PC-9 (cell line): ENCODE measurements at regions of chr2 and their contacts with region 1.

Region 1: DNA sequence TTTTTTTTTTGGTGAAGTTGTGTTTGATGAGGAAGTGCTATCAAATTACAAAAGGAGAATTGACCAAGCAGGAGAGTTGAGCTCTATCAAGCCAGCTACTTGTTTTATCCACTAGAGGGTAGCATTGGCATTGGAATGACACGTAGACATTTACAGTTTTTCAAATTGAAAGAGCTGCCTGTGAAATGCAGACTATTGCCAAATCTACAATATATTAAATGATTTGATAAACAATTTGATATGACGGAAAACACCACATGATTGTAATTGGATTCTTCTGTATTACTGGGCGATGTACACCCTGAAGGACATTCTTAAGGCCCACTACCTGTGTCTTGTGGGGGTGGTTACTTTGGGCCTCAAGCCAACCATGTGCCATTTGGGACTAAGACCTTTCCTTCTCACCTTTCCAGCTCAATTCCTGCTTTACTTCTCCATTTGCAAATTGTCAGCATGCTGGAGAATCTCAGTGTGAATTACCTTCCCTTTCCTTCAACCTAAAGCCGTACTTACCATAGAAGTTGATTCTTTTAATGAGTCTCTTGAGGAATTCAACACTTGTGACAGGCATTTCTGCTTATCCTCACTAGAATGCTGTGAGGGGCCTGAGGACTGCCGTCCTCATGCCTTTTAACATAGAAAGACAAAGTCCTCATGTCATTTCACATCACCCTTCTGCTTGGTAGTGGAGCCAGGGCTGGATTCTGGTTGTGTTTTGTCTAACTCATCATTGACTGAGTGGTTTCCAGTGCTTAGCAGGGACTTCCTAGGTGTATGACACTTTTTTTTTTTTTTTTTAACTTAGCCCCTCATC is 134.8 kb upstream of the THUMPD2 start:
- DNase-seq: peak; percentile 29 to 68
- H3K4me3 ChIP-seq: no peak overlapping the region
- H3K27ac ChIP-seq: no peak overlapping the region
- H3K4me1 ChIP-seq: no peaks in the 10 kb centered on the region
- H3K27me3 ChIP-seq: no peaks in the 10 kb centered on the region
- CTCF ChIP-seq: peak; percentile 94

Region 2: GRCh38 chr2:39968037-39968436 is 54.2 kb after region 1 on chr2:
- CTCF ChIA-PET with region 1: interaction called, 12 read pairs
- POLR2A ChIA-PET with region 1: no interaction called
- intact Hi-C with region 1: no loop called
- DNase-seq: peak in 1 of 2 experiments; percentile 20
- H3K4me3 ChIP-seq: no peak overlapping the region
- H3K27ac ChIP-seq: no peak overlapping the region
- H3K4me1 ChIP-seq: no peaks in the 10 kb centered on the region
- H3K27me3 ChIP-seq: no peaks in the 10 kb centered on the region
- CTCF ChIP-seq: no peak

Region 3: GRCh38 chr2:40554668-40555285 is 640.9 kb after region 1 on chr2:
- CTCF ChIA-PET with region 1: interaction called, 14 read pairs
- POLR2A ChIA-PET with region 1: no interaction called
- intact Hi-C with region 1: loop called (anchors 1 kb)
- DNase-seq: peak; percentile 45 to 62
- H3K4me3 ChIP-seq: no peak overlapping the region
- H3K27ac ChIP-seq: no peak overlapping the region
- H3K4me1 ChIP-seq: no peaks in the 10 kb centered on the region
- H3K27me3 ChIP-seq: no peaks in the 10 kb centered on the region
- CTCF ChIP-seq: peak; percentile 97

Region 4: GRCh38 chr2:41496908-41497307 is 1583.1 kb after region 1 on chr2:
- CTCF ChIA-PET with region 1: interaction called, 9 read pairs
- POLR2A ChIA-PET with region 1: no interaction called
- intact Hi-C with region 1: loop called (anchors 2 kb)
- DNase-seq: no peak
- H3K4me3 ChIP-seq: no peak overlapping the region
- H3K27ac ChIP-seq: no peak overlapping the region
- H3K4me1 ChIP-seq: no peaks in the 10 kb centered on the region
- H3K27me3 ChIP-seq: no peaks in the 10 kb centered on the region
- CTCF ChIP-seq: peak; percentile 65